ENCODE measurements at regions of chr1 and their contacts with region 1.

Region 1: DNA sequence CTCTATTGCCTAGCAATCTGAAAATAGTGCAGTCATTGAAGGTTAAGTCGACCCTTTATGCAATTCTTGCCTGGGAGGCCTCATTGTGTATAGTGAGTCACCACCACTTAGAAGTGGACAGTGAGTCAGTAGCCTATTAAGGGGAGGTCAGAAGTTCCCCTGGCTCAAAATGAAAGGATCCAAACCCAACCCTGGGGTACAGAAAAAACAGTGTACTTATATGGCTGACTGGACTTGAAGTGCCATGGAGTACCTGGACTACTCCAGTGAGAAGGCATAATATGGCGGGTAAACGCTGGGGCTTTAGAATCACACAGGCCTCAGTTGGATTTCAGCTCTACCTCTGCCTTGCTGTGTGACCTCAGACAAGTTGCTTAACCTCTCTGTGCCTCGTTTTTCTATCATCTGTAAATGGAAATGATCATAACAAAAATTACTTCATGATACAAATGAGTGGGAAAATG is 2.2 kb upstream of the BCL9 start:
- DNase-seq: peak; percentile 46
- ATAC-seq: peak; percentile 24
- H3K4me3 Mint-ChIP-seq: no peak overlapping the region
- H3K27ac Mint-ChIP-seq: no peak overlapping the region
- H3K4me1 Mint-ChIP-seq: peaks cover 30% of the 10 kb centered on the region
- H3K27me3 Mint-ChIP-seq: no peaks in the 10 kb centered on the region
- CTCF ChIP-seq: no peak

Region 2: DNA sequence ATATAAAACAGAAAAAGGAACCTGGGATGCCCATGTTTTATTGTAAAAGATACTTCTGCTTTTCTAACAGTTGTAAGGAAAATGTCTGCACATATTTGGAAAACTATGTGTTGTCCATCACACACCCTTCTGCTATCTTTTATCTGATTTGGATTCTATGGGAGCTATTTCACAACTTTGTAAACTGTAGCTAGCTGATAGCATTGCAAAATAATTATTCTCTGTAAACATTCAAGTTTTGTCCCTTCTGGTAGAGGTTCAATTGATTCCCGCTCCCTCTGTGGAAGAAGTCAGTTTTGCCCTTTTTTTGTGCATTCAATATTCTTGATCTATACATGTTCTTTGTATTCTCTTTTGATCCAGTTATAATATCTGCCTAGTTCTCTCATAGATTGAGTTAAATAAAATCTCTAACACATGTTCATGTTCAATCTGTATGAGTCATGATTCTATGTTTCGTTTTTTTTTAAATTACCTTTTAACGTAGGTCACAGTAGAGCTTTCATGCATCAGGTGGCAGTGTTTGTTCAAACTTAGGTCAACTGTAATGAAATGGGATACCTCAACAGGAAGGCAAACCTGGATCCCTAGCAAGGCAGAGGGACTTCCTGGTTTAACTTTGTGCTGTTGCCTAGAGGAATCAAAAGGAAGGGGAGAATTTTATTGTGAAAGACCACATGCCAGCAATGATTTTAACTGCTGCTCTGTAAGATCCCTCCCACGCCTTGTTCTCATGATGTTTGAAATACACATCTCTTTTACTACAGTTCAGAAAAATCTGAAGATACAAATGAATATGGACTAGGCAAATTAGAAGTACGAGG is 23.9 kb before region 1 on chr1:
- CTCF ChIA-PET with region 1: interaction called, 19 read pairs
- POLR2A ChIA-PET with region 1: interaction called, 4 read pairs
- intact Hi-C with region 1: no loop called
- DNase-seq: peak; percentile 17
- ATAC-seq: peak; percentile 77
- H3K4me3 Mint-ChIP-seq: no peak overlapping the region
- H3K27ac Mint-ChIP-seq: peak overlapping the region; percentile 56
- H3K4me1 Mint-ChIP-seq: peaks cover 15% of the 10 kb centered on the region
- H3K27me3 Mint-ChIP-seq: peaks cover 4% of the 10 kb centered on the region
- CTCF ChIP-seq: no peak

Region 3: GRCh38 chr1:147527941-147528936 is 10.9 kb before region 1 on chr1:
- CTCF ChIA-PET with region 1: interaction called, 5 read pairs
- POLR2A ChIA-PET with region 1: interaction called, 20 read pairs
- intact Hi-C with region 1: no loop called
- DNase-seq: peak; percentile 31
- ATAC-seq: peak; percentile 83
- H3K4me3 Mint-ChIP-seq: no peak overlapping the region
- H3K27ac Mint-ChIP-seq: no peak overlapping the region
- H3K4me1 Mint-ChIP-seq: no peaks in the 10 kb centered on the region
- H3K27me3 Mint-ChIP-seq: no peaks in the 10 kb centered on the region
- CTCF ChIP-seq: no peak

Region 4: DNA sequence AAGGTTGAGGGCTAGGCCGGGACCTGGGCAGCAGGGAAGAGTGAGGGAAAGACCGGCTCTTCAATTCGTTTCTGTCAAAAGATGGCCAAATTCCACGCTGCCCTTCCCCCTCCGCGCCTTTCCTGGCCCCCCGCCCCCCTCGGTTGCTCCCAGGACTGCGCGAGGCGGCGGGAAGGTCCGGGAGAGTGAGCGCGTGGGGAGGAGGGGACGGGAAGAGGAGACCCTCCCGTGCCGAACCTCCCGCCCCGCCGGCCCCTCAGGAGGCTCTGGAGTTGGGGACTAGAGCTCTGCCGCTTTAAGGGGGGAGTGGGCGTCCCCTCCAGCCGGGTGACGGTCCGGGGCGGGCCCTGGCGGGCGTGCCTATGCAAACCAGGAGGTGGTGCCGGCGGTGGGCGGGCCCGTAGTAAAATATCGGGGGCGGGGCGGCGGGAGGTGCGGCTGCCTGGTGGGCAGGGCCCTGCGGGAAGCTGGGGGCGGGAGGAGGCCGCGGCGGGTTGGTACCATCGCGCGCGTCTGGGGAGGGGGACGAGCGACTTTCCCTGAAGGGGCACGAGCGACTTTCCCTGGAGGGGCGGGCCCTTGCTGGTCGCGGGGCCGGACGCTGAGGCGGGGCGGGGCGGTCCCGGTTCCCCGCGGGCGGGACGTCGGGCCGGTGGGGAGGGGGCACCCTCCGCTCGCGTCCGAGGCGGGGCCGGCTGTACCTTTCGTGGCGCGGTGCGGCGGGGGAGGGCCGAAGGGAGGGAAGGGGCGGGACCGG is 60.4 kb after region 1 on chr1:
- CTCF ChIA-PET with region 1: interaction called, 11 read pairs
- POLR2A ChIA-PET with region 1: interaction called, 38 read pairs
- intact Hi-C with region 1: loop called (anchors 2 kb)
- DNase-seq: peak; percentile 98
- ATAC-seq: peak; percentile 85
- H3K4me3 Mint-ChIP-seq: peak overlapping the region; percentile 93
- H3K27ac Mint-ChIP-seq: peak overlapping the region; percentile 93
- H3K4me1 Mint-ChIP-seq: peaks cover 32% of the 10 kb centered on the region
- H3K27me3 Mint-ChIP-seq: no peaks in the 10 kb centered on the region
- CTCF ChIP-seq: no peak